Heart right ventricle (tissue), 16 donors: ENCODE measurements at regions of chr11 and their contacts with region 1.

Region 1: GRCh38 chr11:34351687-34352469 is 5.9 kb downstream of the ABTB2 start:
- DNase-seq: no peak
- ATAC-seq: no peak
- H3K4me3 ChIP-seq: no peak overlapping the region
- H3K27ac ChIP-seq: no peak overlapping the region
- H3K4me1 ChIP-seq: peaks cover 22 to 64% (median 47%) of the 10 kb centered on the region in 9 donors
- H3K27me3 ChIP-seq: peaks cover 0 to 43% (median 29%) of the 10 kb centered on the region in 7 donors
- CTCF ChIP-seq: no peak

Region 2: DNA sequence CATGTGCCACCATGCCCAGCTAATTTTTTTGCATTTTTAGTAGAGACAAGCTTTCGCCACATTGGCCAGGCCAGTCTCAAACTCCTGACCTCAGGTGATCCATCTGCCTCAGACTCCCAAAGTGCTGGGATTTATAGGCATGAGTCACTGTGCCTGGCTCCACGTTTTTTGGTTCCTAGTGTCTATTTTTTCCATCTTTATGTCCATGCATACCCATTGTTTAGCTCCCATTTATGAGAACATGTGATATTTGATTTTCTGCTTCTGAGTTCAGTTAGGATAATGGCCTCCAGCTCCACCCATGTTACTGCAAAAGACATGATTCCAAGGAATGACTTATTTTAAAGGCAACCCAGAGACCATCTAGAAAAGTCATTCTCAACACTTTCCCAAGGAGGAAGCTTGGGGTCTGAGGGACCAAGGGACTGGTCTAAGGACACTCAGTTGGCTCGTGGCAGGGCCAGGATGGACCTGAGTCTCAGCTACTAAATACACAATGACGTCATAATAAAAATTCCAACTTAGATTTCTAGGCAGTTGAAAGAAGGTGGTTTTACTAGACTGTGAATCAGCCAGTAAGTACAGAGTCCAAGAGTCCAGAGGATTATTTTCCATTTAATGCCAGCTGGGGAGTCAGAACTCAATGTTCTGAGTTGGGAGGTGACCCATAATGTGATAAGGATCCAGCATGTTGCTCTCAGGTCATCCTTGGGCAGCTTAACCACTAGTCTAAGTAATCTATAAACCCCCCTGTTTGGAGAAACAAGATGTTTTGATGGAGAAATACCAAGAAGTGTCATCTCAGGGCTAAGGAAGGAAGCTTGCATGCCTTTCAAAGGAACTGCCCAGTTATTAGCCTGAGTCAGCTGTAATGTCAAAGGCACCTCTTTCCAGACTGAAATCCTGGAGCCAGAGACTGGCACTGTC is 33.5 kb before region 1 on chr11:
- intact Hi-C with region 1: loop called in 3 of 10 experiments (anchors 5 kb)
- DNase-seq: no peak
- ATAC-seq: peak in 1 of 8 donors; percentile 18
- H3K4me3 ChIP-seq: no peak overlapping the region
- H3K27ac ChIP-seq: no peak overlapping the region
- H3K4me1 ChIP-seq: peaks cover 2 to 39% (median 20%) of the 10 kb centered on the region in 9 donors
- H3K27me3 ChIP-seq: no peaks in the 10 kb centered on the region
- CTCF ChIP-seq: no peak

Region 3: DNA sequence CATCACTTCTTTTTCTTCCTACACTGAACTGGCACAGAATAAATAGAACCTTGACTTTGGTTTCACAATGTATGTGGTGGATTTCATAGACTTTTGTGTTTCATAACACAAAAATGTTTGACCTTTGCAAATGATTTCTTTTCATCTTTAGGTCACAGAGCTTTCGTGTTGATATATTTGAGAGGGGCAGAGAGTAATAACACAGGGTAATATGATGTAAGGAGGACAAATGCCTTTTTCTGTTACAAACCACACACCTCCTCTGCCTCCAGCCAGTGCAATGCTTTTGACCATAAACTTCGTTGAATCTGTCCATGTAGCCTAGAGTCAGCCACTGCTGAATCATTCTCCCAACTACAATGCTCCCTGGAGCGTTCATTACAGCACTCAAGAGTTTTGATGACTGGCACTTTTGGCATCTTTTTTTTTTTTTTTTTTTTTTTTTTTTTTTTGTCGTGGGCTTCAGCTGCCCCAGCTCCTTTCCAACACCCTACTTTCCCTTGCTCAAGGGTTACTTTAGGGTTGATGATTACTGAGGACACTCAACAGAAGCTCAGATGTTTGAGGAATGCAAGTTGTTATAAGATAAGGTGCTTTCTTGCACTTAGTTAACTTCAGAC is 75.4 kb after region 1 on chr11:
- intact Hi-C with region 1: no loop called
- DNase-seq: no peak
- ATAC-seq: peak in 3 of 8 donors; percentile 35 to 85 (median 43)
- H3K4me3 ChIP-seq: no peak overlapping the region
- H3K27ac ChIP-seq: no peak overlapping the region
- H3K4me1 ChIP-seq: peaks cover 0 to 45% (median 4%) of the 10 kb centered on the region in 9 donors
- H3K27me3 ChIP-seq: peaks cover 0 to 7% (median 0%) of the 10 kb centered on the region in 7 donors
- CTCF ChIP-seq: no peak